SK-N-SH (cell line): ENCODE measurements at regions of chr20 and their contacts with region 1.

Region 1: GRCh38 chr20:37384683-37385174 is 38.8 kb downstream of the SRC start:
- DNase-seq: peak; percentile 93
- H3K4me3 ChIP-seq: no peak overlapping the region; a peak in 1 of 4 replicates
- H3K27ac ChIP-seq: peak overlapping the region in 1 of 2 experiments; percentile 77; a peak in 2 of 4 replicates
- H3K4me1 ChIP-seq: peaks cover 0 to 18% of the 10 kb centered on the region in 2 experiments; a peak in 1 of 4 replicates
- H3K27me3 ChIP-seq: no peaks in the 10 kb centered on the region
- CTCF ChIP-seq: peak; percentile 75
- EP300 ChIP-seq: no peak
- RAD21 ChIP-seq: peak; percentile 68

Region 2: DNA sequence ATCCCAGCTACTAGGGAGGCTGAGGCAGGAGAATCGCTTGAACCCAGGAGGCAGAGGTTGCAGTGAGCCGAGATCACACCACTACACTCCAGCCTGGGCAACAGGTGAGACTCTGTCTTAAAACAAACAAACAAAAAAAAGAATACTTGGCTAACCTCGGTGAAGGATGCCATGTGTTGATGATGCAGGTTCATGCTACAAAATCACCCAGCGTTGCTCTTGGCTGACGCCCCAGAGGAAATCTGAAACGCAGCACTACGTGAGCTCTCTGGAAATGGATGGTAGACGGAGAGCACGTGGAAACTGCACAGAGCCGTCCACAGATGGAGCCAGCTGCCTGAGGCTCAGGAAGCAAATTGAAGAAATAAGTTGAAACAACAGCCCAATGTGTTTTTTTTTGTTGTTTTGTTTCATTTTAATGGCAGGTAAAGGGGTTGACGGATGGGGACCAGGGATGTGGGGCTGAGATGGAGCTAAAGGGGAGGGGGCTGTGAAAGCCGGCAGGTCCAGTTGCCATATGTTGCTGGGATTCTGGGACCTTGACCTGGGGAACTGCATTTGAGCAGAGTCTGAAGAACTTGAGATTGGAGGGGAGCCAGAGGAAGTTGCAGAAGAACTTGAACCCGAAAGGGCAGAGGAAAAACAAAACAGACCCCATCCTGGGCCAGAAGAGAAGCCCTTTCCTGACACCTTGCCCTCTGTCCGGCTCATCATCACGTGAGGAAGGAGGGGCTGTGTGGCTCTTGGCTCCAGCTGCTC is 108.1 kb before region 1 on chr20:
- CTCF ChIA-PET with region 1: interaction called, 15 read pairs
- POLR2A ChIA-PET with region 1: interaction called, 3 read pairs
- DNase-seq: peak; percentile 63
- H3K4me3 ChIP-seq: no peak overlapping the region
- H3K27ac ChIP-seq: peak overlapping the region in 1 of 2 experiments; percentile 26; a peak in 2 of 4 replicates
- H3K4me1 ChIP-seq: peaks cover 0 to 19% of the 10 kb centered on the region in 2 experiments; a peak in 1 of 4 replicates
- H3K27me3 ChIP-seq: no peaks in the 10 kb centered on the region
- CTCF ChIP-seq: peak; percentile 41
- EP300 ChIP-seq: peak in 1 of 2 experiments; percentile 19; a peak in 1 of 4 replicates
- RAD21 ChIP-seq: peak; percentile 73

Region 3: DNA sequence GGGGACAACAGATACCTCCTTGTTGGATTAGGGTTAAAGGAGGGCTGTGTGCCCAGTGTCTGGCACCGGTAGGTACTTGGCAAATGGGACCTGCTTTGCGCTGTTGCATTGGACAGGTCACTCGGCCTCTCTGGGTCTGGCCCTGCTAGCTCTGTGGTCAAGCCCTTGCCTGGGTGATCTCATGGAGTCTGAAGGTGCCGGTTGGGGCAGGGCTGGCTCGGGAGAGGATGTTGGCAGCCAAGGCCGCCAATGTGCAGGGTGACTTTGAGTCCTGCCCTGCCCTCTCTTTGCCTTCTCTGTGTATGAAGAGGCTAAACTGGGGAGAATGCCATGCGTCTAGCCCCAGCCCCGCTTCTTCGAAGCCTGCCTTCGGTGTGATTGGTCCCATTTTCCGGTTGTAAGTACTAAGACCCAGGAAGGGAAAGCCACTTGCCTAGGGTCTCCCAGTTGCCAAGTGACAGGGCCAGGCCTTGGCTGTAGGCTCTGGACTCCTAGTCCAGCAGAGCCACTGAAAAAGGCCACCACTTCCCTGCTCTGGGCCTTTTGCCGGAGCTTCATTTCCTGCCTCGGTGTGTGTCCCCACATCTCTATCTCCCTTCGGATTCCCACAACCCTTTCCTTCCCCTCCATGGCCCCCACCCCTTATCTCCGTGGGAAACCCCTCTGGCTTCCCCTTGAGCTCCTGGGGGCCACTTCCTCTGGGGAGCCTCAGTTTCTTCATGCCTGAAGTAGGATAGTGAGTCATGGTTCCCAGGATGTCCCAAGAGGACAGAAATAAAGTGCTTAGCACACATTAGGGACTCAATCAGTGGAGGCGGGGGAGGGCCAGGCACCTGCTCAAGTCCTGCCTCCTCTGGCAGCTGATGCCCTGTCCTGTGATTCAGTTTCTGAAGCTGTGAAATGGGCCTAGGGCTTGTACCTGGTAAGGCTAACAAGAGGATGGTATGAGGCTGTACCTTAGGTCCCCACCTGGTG is 34.9 kb before region 1 on chr20:
- CTCF ChIA-PET with region 1: interaction called, 20 read pairs
- POLR2A ChIA-PET with region 1: no interaction called
- DNase-seq: peak; percentile 13
- H3K4me3 ChIP-seq: no peak overlapping the region
- H3K27ac ChIP-seq: peak overlapping the region in 1 of 2 experiments; percentile 50; a peak in 1 of 4 replicates
- H3K4me1 ChIP-seq: peaks cover 4 to 71% of the 10 kb centered on the region in 2 experiments; a peak in 3 of 4 replicates
- H3K27me3 ChIP-seq: no peaks in the 10 kb centered on the region
- CTCF ChIP-seq: no peak
- EP300 ChIP-seq: no peak
- RAD21 ChIP-seq: no peak

Region 4: DNA sequence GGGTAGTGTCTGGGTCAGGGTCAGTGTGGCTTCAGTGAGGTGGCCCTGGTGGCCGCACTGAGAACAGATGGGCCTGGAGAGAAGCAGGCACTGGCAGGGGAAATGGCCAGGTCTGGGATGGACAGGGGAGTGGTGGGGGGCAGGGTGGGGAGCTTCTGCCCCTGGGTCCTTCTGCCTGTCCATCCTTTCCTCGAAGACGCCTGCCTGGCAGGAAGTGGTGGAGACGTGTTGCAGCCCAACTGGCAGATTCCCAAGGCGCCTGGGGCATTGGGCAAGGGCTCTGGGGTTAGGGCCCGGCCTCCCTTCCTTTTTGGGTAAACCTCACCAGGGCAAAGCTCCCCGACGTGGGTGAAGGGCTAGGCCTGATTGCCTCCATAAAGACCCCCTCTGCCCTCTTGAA is 28.3 kb before region 1 on chr20:
- CTCF ChIA-PET with region 1: interaction called, 16 read pairs
- POLR2A ChIA-PET with region 1: interaction called, 4 read pairs
- DNase-seq: peak; percentile 68
- H3K4me3 ChIP-seq: no peak overlapping the region
- H3K27ac ChIP-seq: peak overlapping the region in 1 of 2 experiments; percentile 90; a peak in 2 of 4 replicates
- H3K4me1 ChIP-seq: peaks cover 0 to 74% of the 10 kb centered on the region in 2 experiments; a peak in 2 of 4 replicates
- H3K27me3 ChIP-seq: no peaks in the 10 kb centered on the region
- CTCF ChIP-seq: no peak
- EP300 ChIP-seq: 0 out of 4 replicates have a peak, but pooled peaks of 1 of the 2 experiments have one; percentile 14
- RAD21 ChIP-seq: no peak

Region 5: DNA sequence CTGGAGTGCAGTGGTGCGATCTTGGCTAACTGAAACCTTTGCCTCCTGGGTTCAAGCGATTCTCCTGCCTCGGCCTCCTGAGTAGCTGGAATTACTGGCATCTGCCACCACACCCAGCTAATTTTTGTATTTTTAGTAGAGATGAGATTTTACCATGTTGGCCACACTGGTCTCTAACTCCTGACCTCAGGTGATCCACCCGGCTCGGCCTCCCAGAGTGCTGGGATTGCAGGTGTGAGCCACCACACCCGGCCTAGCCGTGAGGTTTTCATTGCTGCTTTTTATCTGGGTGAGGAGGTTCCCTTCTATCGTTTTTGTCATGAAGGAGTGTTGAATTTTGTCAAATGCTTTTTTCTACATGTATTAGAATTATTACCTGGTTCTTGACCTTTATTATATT is 14.9 kb before region 1 on chr20:
- CTCF ChIA-PET with region 1: interaction called, 31 read pairs
- POLR2A ChIA-PET with region 1: no interaction called
- DNase-seq: no peak
- H3K4me3 ChIP-seq: no peak overlapping the region
- H3K27ac ChIP-seq: no peak overlapping the region
- H3K4me1 ChIP-seq: no peaks in the 10 kb centered on the region
- H3K27me3 ChIP-seq: no peaks in the 10 kb centered on the region
- CTCF ChIP-seq: no peak
- EP300 ChIP-seq: no peak
- RAD21 ChIP-seq: no peak

Region 6: DNA sequence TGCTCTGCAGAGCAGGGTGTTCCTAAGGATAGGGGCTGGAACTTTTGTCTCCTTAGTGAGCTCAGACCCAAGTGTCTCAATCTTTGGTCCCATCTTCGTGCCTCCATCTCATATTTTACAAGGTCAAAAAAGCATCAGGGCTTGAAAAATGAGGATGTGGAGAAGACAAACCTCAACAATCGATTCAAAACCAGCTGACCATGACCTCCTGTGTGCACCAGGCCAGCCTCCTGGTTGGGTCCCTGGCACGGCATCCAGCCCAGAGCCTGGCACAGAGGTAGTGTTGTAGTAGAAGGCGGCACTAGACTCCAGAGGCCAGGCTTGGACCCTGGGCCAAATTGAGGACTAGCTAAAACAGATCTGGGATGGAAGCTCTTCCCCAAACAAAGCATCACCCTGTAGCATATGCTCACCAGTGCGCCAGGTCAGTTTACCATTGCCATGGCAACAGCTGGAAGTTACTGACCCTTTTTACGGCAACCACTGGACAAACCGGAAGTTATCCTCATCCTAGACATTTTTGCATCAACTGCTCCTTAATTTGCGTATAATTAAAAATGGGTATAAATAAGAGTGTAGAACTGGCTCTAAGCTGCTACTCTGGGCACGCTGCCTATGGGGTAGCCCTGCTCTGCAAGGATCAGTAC is 212.3 kb after region 1 on chr20:
- CTCF ChIA-PET with region 1: no interaction called
- POLR2A ChIA-PET with region 1: no interaction called
- DNase-seq: no peak
- H3K4me3 ChIP-seq: no peak overlapping the region
- H3K27ac ChIP-seq: no peak overlapping the region
- H3K4me1 ChIP-seq: peaks cover 0 to 25% of the 10 kb centered on the region in 2 experiments; a peak in 2 of 4 replicates
- H3K27me3 ChIP-seq: peaks cover 5% of the 10 kb centered on the region; the same call in 1 of the 2 replicates
- CTCF ChIP-seq: no peak
- EP300 ChIP-seq: no peak
- RAD21 ChIP-seq: no peak